CD4-positive, alpha-beta T cell (primary cell): ENCODE measurements at regions of chr12 and their contacts with region 1.

Region 1: DNA sequence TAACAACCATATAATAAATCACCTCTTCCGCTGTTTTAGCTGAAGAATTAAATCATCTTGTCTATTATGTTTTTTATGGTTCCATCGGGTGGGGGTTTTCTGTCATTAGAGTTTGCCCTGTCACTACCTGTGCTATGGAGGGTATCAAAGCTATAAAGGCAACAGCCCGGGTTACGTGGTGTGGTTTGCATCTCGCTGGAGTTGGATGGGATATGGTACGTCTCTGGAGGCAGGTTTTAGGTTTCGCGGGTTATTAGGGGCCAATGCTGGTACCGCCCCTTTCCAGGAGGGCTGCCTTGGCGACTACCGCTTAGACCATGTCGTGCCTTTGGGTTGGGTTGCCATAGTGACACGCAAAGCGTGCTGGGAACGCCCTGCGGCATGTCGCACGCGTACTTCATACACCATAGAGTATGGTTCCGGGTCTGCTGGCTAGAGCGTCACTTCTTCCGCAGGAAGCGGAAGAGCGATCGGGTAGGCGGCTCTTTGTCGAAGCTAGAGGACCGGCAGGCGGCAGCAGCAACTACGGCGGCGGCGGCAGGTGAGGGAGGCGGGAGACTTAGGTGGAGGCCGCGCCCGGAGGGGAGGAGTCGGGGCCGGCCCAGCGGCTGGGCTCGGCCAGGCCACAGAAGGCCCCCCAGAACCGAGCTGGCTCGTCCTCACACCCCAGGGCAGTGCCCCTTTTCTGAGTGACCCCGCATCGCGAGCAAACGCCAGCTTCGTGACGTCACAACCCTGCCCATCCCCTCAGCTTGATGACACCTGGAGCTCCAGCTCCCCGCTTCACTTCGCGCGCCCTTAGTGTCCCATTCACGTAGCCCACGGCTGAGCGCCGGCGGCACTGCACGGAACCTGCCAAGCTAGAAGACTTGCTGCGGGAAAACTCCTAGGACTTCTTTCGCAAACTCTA is at the start of gene ZC3H10:
- DNase-seq: peak; percentile 89 to 100 (median 94)
- ATAC-seq: peak; percentile 67
- H3K4me3 ChIP-seq: peak within 1 kb of the TSS; percentile 73
- H3K4me3 Mint-ChIP-seq: peak within 1 kb of the TSS; percentile 97
- H3K27ac ChIP-seq: peak within 1 kb of the TSS; percentile 75 to 90
- H3K27ac Mint-ChIP-seq: peak within 1 kb of the TSS; percentile 94
- H3K4me1 ChIP-seq: peaks cover 35% of the 10 kb centered on the region
- H3K4me1 Mint-ChIP-seq: peaks cover 33% of the 10 kb centered on the region
- H3K27me3 ChIP-seq: no peaks in the 10 kb centered on the region
- H3K27me3 Mint-ChIP-seq: no peaks in the 10 kb centered on the region
- CTCF ChIP-seq: peak; percentile 52
- total RNA-seq, gene ZC3H10: 6.3 to 8.9 TPM

Region 2: DNA sequence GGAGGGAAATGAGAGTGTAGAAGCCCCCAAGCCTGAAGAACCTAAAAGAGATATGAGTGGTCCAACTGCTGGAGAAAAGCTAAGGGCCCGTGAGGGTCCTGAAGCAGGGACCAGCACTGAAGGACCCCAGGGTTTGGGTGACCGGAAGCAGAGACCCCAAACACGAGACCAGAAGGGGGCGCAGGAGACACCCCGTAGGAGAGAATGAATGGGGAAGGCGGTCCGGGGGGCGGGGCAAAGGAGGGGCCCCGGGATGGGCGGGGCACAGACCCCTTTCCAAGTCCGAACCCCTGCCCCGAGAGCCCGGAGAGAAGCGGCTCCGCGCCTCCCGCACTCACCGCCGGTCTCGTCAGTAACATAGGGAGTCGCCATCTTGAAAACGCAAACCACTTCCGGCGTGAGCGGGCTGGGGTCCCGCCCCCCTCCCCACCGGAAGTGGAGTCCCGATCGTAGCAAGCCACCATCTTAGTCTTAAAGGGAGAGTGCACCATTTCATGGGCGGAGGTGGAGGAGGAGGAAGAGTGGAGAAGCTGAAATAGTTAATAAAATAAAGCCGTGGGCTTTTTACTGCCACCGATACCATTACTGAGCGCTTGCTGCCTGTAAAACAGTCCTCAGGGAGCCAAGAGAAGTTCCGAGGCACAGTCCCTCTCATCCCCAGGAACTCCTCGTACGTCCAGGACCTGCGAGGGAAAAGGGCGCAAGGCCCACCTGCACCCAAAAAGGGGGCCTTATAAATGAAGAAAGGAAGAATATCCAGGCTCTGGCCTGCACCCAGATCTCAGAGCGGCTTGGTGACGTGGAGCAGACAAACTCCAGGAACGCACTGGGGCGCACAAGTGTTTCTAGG is 191.1 kb before region 1 on chr12:
- CTCF ChIA-PET with region 1: no interaction called
- POLR2A ChIA-PET with region 1: interaction called, 11 read pairs
- intact Hi-C with region 1: loop called (anchors 5 kb)
- DNase-seq: peak; percentile 83 to 96 (median 88)
- ATAC-seq: peak; percentile 32
- H3K4me3 ChIP-seq: peak overlapping the region; percentile 98
- H3K4me3 Mint-ChIP-seq: peak overlapping the region; percentile 96
- H3K27ac ChIP-seq: peak overlapping the region; percentile 72 to 93
- H3K27ac Mint-ChIP-seq: peak overlapping the region; percentile 97
- H3K4me1 ChIP-seq: peaks cover 45% of the 10 kb centered on the region
- H3K4me1 Mint-ChIP-seq: peaks cover 56% of the 10 kb centered on the region
- H3K27me3 ChIP-seq: no peaks in the 10 kb centered on the region
- H3K27me3 Mint-ChIP-seq: no peaks in the 10 kb centered on the region
- CTCF ChIP-seq: peak; percentile 86

Region 3: GRCh38 chr12:56078990-56079664 is 38.9 kb before region 1 on chr12:
- CTCF ChIA-PET with region 1: interaction called, 7 read pairs
- POLR2A ChIA-PET with region 1: interaction called, 11 read pairs
- intact Hi-C with region 1: no loop called
- DNase-seq: peak in 13 of 14 experiments; percentile 23 to 69 (median 44)
- ATAC-seq: peak; percentile 67
- H3K4me3 ChIP-seq: peak overlapping the region; percentile 76
- H3K4me3 Mint-ChIP-seq: peak overlapping the region; percentile 87
- H3K27ac ChIP-seq: no peak overlapping the region
- H3K27ac Mint-ChIP-seq: no peak overlapping the region
- H3K4me1 ChIP-seq: peaks cover 21% of the 10 kb centered on the region
- H3K4me1 Mint-ChIP-seq: peaks cover 14% of the 10 kb centered on the region
- H3K27me3 ChIP-seq: peaks cover 14 to 23% of the 10 kb centered on the region in 2 experiments
- H3K27me3 Mint-ChIP-seq: peaks cover 17% of the 10 kb centered on the region
- CTCF ChIP-seq: peak; percentile 66

Region 4: GRCh38 chr12:56152318-56153033 is 34.4 kb after region 1 on chr12 and contains the start of gene MYL6B:
- CTCF ChIA-PET with region 1: interaction called, 16 read pairs
- POLR2A ChIA-PET with region 1: interaction called, 16 read pairs
- intact Hi-C with region 1: loop called in 1 of 2 experiments (anchors 5 kb)
- DNase-seq: peak; percentile 85 to 96 (median 91)
- ATAC-seq: peak; percentile 88
- H3K4me3 ChIP-seq: peak within 1 kb of the TSS; percentile 76
- H3K4me3 Mint-ChIP-seq: peak within 1 kb of the TSS; percentile 94
- H3K27ac ChIP-seq: peak within 1 kb of the TSS; percentile 75 to 87
- H3K27ac Mint-ChIP-seq: peak within 1 kb of the TSS; percentile 94
- H3K4me1 ChIP-seq: peaks cover 31% of the 10 kb centered on the region
- H3K4me1 Mint-ChIP-seq: peaks cover 29% of the 10 kb centered on the region
- H3K27me3 ChIP-seq: no peaks in the 10 kb centered on the region
- H3K27me3 Mint-ChIP-seq: no peaks in the 10 kb centered on the region
- CTCF ChIP-seq: no peak
- total RNA-seq, gene MYL6B: 6.2 to 6.4 TPM

Region 5: DNA sequence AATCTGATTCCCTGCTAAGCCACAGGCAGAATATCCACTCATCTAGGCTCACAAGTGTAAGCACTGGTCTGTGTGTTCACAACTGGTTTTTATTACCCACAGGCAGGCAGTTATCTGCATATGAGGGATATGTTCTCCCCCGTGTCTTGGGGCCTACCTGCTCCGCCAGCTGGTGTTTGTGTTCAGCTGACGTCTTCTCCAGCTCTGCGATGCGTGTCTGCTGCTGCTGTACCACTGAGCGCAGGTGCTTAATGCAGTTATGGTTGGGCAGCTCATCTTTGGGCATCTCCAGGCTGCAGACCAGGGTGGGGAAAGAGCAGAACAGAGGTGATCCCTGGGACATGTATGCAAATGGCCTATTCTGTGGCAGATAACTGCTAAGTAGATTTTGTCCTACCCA is 90.0 kb after region 1 on chr12:
- CTCF ChIA-PET with region 1: no interaction called
- POLR2A ChIA-PET with region 1: no interaction called
- intact Hi-C with region 1: no loop called
- DNase-seq: no peak
- ATAC-seq: no peak
- H3K4me3 ChIP-seq: no peak overlapping the region
- H3K4me3 Mint-ChIP-seq: no peak overlapping the region
- H3K27ac ChIP-seq: no peak overlapping the region
- H3K27ac Mint-ChIP-seq: no peak overlapping the region
- H3K4me1 ChIP-seq: no peaks in the 10 kb centered on the region
- H3K4me1 Mint-ChIP-seq: no peaks in the 10 kb centered on the region
- H3K27me3 ChIP-seq: no peaks in the 10 kb centered on the region
- H3K27me3 Mint-ChIP-seq: no peaks in the 10 kb centered on the region
- CTCF ChIP-seq: no peak

Region 6: GRCh38 chr12:56266693-56267442 is 148.8 kb after region 1 on chr12 and contains the start of gene COQ10A:
- CTCF ChIA-PET with region 1: interaction called, 4 read pairs
- POLR2A ChIA-PET with region 1: interaction called, 12 read pairs
- intact Hi-C with region 1: no loop called
- DNase-seq: peak; percentile 77 to 95 (median 88)
- ATAC-seq: peak; percentile 88
- H3K4me3 ChIP-seq: peak within 1 kb of the TSS; percentile 72
- H3K4me3 Mint-ChIP-seq: peak within 1 kb of the TSS; percentile 96
- H3K27ac ChIP-seq: peak within 1 kb of the TSS; percentile 91 to 96
- H3K27ac Mint-ChIP-seq: peak within 1 kb of the TSS; percentile 91
- H3K4me1 ChIP-seq: peaks cover 16% of the 10 kb centered on the region
- H3K4me1 Mint-ChIP-seq: peaks cover 17% of the 10 kb centered on the region
- H3K27me3 ChIP-seq: no peaks in the 10 kb centered on the region
- H3K27me3 Mint-ChIP-seq: no peaks in the 10 kb centered on the region
- CTCF ChIP-seq: peak; percentile 64
- total RNA-seq, gene COQ10A: 27.6 to 29.2 TPM

Region 7: DNA sequence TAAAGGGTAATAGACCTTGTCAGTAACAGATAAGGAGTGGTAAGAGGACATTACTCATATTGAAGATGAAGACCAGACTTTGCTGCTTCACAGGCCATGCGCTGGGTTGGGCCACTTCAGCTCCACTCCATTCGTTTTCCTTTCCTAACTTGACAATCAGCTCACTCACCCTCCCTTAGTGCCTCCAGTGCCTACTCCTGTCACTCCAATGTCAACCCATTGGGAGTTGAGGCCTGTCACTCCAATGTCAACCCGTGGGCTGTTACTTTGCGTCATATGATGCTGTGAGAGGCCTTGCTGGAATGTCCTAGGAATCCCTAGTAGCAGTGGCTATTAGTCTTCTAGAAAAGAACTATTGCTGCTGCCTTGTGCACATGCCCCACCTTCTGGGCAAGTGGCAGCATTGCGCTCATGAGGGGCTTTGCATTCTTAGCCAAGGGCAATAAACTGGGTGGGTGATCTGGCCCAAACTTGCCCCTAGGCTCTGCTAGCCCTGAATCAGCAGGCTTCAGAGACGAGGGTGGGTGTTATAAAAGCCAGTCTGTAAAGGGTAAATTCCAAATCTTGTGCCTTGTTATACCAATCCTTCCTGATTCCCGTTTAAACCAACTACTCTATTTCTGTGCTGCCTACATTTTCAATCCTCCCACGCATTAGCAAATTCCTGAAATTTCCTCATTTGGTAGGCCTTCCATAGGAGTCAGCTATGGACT is 476.0 kb after region 1 on chr12:
- CTCF ChIA-PET with region 1: no interaction called
- POLR2A ChIA-PET with region 1: no interaction called
- intact Hi-C with region 1: loop called in 1 of 2 experiments (anchors 10 kb)
- DNase-seq: peak; percentile 35 to 75 (median 48)
- ATAC-seq: peak; percentile 85
- H3K4me3 ChIP-seq: no peak overlapping the region
- H3K4me3 Mint-ChIP-seq: no peak overlapping the region
- H3K27ac ChIP-seq: no peak overlapping the region
- H3K27ac Mint-ChIP-seq: peak overlapping the region; percentile 6
- H3K4me1 ChIP-seq: no peaks in the 10 kb centered on the region
- H3K4me1 Mint-ChIP-seq: peaks cover 8% of the 10 kb centered on the region
- H3K27me3 ChIP-seq: no peaks in the 10 kb centered on the region
- H3K27me3 Mint-ChIP-seq: no peaks in the 10 kb centered on the region
- CTCF ChIP-seq: peak; percentile 79